ENCODE measurements at regions of chr5 and their contacts with region 1.

Region 1: GRCh38 chr5:10479226-10479721 is 37.6 kb downstream of the ROPN1L start:
- DNase-seq: peak; percentile 77
- H3K4me3 ChIP-seq: no peak overlapping the region
- H3K27ac ChIP-seq: no peak overlapping the region
- H3K4me1 ChIP-seq: peaks cover 13% of the 10 kb centered on the region
- H3K27me3 ChIP-seq: no peaks in the 10 kb centered on the region
- CTCF ChIP-seq: no peak

Region 2: GRCh38 chr5:10452768-10453331 is 26.4 kb before region 1 on chr5:
- CTCF ChIA-PET with region 1: no interaction called
- dilution Hi-C with region 1: no loop called
- in situ Hi-C with region 1: no loop called
- intact Hi-C with region 1: no loop called
- DNase-seq: peak; percentile 64
- H3K4me3 ChIP-seq: no peak overlapping the region
- H3K27ac ChIP-seq: no peak overlapping the region
- H3K4me1 ChIP-seq: peaks cover 43% of the 10 kb centered on the region
- H3K27me3 ChIP-seq: no peaks in the 10 kb centered on the region
- CTCF ChIP-seq: peak; percentile 79 to 88

Region 3: DNA sequence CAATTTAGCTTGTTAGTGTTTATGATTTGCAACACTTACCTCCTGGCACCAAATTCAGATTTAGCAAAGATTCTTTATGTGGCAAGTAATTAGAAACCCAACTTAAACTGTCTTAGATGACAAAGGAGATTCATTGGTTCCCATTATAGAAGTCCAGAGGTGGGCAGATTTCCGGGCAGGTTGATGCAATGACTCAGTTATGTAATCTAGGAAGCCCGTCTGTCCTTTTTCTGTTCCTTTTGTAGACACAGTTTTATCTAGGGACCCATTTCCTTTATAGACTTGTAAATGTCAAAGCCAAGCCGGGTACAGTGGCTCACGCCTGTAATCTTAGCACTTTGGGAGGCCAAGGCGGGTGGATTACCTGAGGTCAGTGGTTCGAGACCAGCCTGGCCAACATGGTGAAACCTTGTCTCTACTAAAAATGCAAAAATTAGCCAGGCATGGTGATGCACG is 64.3 kb after region 1 on chr5:
- CTCF ChIA-PET with region 1: no interaction called
- dilution Hi-C with region 1: loop called (anchors 5 kb)
- in situ Hi-C with region 1: no loop called
- intact Hi-C with region 1: no loop called
- DNase-seq: no peak
- H3K4me3 ChIP-seq: no peak overlapping the region
- H3K27ac ChIP-seq: no peak overlapping the region
- H3K4me1 ChIP-seq: no peaks in the 10 kb centered on the region
- H3K27me3 ChIP-seq: peaks cover 3% of the 10 kb centered on the region
- CTCF ChIP-seq: no peak

Region 4: GRCh38 chr5:10601246-10602030 is 122.2 kb after region 1 on chr5:
- CTCF ChIA-PET with region 1: no interaction called
- dilution Hi-C with region 1: loop called (anchors 5 kb)
- in situ Hi-C with region 1: no loop called
- intact Hi-C with region 1: loop called (anchors 2 kb)
- DNase-seq: peak; percentile 86
- H3K4me3 ChIP-seq: peak overlapping the region in 2 of 3 experiments; percentile 12 to 23
- H3K27ac ChIP-seq: peak overlapping the region; percentile 47
- H3K4me1 ChIP-seq: peaks cover 28% of the 10 kb centered on the region
- H3K27me3 ChIP-seq: no peaks in the 10 kb centered on the region
- CTCF ChIP-seq: no peak

Region 5: GRCh38 chr5:10607666-10608073 is 128.4 kb after region 1 on chr5:
- CTCF ChIA-PET with region 1: no interaction called
- dilution Hi-C with region 1: loop called (anchors 5 kb)
- in situ Hi-C with region 1: no loop called
- intact Hi-C with region 1: no loop called
- DNase-seq: no peak
- H3K4me3 ChIP-seq: no peak overlapping the region
- H3K27ac ChIP-seq: no peak overlapping the region
- H3K4me1 ChIP-seq: no peaks in the 10 kb centered on the region
- H3K27me3 ChIP-seq: no peaks in the 10 kb centered on the region
- CTCF ChIP-seq: no peak